WTC11 (cell line): ENCODE measurements at regions of chr6 and their contacts with region 1.

Region 1: GRCh38 chr6:43075670-43076463 is at the start of gene PTK7:
- DNase-seq: peak; percentile 86
- ATAC-seq: peak; percentile 73
- H3K4me3 Mint-ChIP-seq: peak within 1 kb of the TSS; percentile 84
- H3K27ac Mint-ChIP-seq: no peak within 1 kb of the TSS
- H3K4me1 Mint-ChIP-seq: peaks cover 38% of the 10 kb centered on the region
- H3K27me3 Mint-ChIP-seq: no peaks in the 10 kb centered on the region; the same call in 1 of the 2 replicates
- CTCF ChIP-seq: no peak
- total RNA-seq, gene PTK7: 151 to 165 TPM (median 160 TPM) in 3 replicates

Region 2: DNA sequence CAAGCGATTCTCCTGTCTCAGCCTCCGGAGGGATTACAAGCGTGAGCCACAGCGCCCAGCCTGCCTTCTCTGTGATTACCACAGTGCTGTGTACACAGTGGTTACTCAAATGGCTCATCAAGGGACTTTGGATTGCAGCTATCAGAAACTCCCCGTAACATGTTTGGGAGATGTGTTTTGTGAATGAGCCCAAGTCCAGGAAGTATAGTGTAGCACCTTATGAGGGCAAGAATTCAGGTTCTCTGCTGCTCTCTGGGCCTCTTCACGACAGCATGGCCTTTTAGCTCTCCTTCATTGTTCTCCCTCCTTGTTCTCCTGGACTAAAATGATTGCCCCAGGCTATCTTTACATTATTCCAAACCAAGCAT is 230.6 kb before region 1 on chr6:
- CTCF ChIA-PET with region 1: no interaction called
- POLR2A ChIA-PET with region 1: no interaction called
- DNase-seq: no peak
- ATAC-seq: no peak
- H3K4me3 Mint-ChIP-seq: no peak overlapping the region
- H3K27ac Mint-ChIP-seq: no peak overlapping the region
- H3K4me1 Mint-ChIP-seq: no peaks in the 10 kb centered on the region
- H3K27me3 Mint-ChIP-seq: no peaks in the 10 kb centered on the region
- CTCF ChIP-seq: no peak

Region 3: DNA sequence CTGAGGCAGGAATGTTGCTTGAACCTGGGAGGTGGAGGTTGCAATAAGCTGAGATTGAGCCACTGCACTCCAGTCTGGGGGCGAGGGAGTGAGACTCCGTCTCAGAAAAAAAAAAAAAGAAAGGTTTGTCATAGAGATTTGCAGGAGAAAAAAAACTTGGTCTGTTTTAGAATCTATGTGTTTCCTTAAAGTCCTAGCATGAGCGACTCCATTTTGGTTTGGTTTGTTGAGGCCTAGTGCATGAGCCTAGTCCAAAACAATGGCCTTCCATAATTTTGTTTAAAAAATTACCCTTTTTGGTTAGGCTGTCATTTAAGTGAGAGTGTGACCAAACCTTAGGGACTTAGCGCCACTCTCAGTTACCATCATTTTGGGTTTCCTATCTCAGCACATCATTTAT is 123.5 kb before region 1 on chr6:
- CTCF ChIA-PET with region 1: no interaction called
- POLR2A ChIA-PET with region 1: no interaction called
- DNase-seq: no peak
- ATAC-seq: no peak
- H3K4me3 Mint-ChIP-seq: no peak overlapping the region
- H3K27ac Mint-ChIP-seq: no peak overlapping the region
- H3K4me1 Mint-ChIP-seq: peaks cover 14% of the 10 kb centered on the region
- H3K27me3 Mint-ChIP-seq: no peaks in the 10 kb centered on the region; the same call in 1 of the 2 replicates
- CTCF ChIP-seq: no peak

Region 4: DNA sequence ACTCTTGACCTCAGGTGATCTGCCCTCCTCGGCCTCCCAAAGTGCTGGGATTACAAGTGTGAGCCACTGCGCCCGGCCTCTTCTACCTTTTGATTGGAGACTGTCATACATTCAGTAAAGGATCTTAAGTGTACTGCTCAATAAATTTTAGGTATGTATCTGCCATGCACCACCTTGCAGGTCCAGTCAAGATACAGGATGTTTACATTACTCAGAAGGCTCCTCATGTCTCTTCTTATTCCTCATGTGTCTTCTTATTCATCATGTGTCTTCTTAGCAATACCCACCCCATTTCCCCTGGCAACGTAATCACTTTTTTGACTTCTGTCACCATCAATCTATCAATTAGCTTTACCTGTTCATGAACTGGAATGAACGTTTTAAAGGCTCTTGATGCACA is 70.0 kb before region 1 on chr6:
- CTCF ChIA-PET with region 1: no interaction called
- POLR2A ChIA-PET with region 1: no interaction called
- DNase-seq: no peak
- ATAC-seq: no peak
- H3K4me3 Mint-ChIP-seq: no peak overlapping the region
- H3K27ac Mint-ChIP-seq: no peak overlapping the region
- H3K4me1 Mint-ChIP-seq: peaks cover 4% of the 10 kb centered on the region; the same call in 1 of the 2 replicates
- H3K27me3 Mint-ChIP-seq: no peaks in the 10 kb centered on the region
- CTCF ChIP-seq: no peak

Region 5: GRCh38 chr6:43096451-43097097 is 20.7 kb after region 1 on chr6:
- CTCF ChIA-PET with region 1: interaction called, 4 read pairs
- POLR2A ChIA-PET with region 1: interaction called, 10 read pairs
- DNase-seq: peak; percentile 51
- ATAC-seq: peak; percentile 81
- H3K4me3 Mint-ChIP-seq: peak overlapping the region; percentile 10
- H3K27ac Mint-ChIP-seq: peak overlapping the region; percentile 97
- H3K4me1 Mint-ChIP-seq: peaks cover 64% of the 10 kb centered on the region
- H3K27me3 Mint-ChIP-seq: no peaks in the 10 kb centered on the region
- CTCF ChIP-seq: no peak

Region 6: GRCh38 chr6:43629505-43630300 is 553.8 kb after region 1 on chr6:
- CTCF ChIA-PET with region 1: no interaction called
- POLR2A ChIA-PET with region 1: no interaction called
- DNase-seq: peak; percentile 94
- ATAC-seq: peak; percentile 81
- H3K4me3 Mint-ChIP-seq: peak overlapping the region; percentile 98
- H3K27ac Mint-ChIP-seq: peak overlapping the region; percentile 100
- H3K4me1 Mint-ChIP-seq: peaks cover 17% of the 10 kb centered on the region
- H3K27me3 Mint-ChIP-seq: no peaks in the 10 kb centered on the region
- CTCF ChIP-seq: no peak